Right ventricle myocardium inferior (tissue), 1 donor: ENCODE measurements at regions of chr6 and their contacts with region 1.

Region 1: DNA sequence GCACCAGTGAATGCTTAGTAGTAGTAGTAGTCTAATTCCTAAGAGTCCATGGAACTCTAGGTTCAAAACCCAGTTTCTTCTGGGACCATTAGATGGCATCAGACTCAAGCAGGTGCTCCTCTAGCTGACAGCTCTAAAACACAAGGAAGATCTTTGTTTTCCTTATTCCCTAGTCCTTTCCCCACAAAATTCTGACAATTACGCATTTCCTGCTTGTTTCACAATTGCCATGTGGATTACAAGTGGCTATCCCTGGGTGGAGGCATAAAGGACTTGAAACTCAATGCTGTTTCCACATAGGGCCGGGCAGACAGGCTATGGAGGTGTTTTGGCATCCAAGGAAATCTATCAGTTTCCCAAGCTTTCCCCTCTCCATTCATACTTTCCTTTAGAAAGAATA is 9.2 kb upstream of the HLA-DOB start:
- DNase-seq: no peak
- ATAC-seq: peak; percentile 85

Region 2: DNA sequence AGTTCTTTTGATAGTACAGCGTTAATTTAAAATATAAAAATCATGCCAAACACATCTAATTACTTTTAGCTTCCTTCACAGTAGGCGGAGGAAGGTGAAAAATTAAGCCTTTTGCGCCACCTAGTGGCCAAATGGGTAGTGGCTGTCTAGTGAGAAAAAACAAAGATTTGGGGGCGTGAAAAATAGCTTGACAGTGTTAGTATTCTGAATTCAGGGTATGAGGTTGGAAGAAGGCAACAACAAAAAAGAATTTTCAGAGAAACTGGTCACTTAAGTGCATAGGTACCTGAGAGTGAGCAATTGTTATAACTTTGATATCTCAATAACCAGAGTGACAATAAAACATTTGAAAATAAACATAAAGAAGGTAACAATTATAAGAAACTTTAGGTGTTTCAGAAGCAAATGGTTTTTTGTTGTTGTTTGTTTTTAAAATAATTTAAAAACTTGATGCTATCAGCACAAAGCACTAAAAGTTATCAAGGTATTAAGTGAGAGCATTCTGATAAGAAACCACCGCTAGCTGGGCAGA is 42.4 kb after region 1 on chr6:
- intact Hi-C with region 1: loop called (anchors 2 kb)
- DNase-seq: no peak
- ATAC-seq: peak; percentile 67

Region 3: DNA sequence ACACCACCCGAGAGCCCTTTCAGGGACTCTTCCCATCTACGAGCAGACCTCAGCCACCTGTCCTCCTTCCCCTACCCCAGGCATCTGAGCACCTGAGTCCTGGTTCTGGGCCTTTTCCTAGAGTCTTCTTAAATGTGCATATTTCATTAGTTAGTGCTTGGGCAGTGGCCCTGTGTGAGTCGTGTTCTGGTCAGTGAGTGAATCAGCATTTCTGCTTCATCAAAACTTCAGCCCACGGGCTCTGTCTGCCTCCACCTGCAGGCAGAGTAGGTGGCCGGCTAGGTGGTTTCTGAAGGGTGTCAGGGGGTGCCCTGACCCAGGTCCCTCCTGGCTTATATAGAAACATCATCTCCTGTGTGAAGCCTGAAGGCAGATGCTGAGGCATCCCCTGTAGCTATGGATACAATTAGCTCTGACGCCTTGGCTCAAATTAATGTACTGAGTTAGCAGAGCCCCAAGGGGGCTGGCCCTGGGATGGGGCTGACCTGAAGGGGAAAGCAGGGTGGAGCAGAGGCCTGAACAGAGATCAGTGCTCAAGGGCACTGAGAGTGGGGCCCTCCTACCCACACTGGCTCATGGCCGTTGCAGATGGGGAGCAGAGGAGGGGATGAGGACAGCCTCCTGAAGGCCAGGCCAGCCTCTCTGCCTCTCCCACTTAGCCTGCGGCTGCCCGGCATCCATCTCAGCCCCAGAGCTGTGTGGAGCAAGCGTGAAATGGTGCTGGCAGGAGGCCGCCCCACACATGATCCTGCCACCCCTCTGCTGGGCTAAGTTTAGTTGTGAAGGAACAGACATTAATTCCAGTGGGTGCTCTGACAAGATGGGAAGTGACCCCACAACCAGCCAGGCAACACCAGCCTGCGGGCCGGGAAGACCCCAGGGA is 907.1 kb after region 1 on chr6:
- intact Hi-C with region 1: no loop called
- DNase-seq: no peak
- ATAC-seq: no peak